ENCODE measurements at regions of chr3 and their contacts with region 1.

Region 1: DNA sequence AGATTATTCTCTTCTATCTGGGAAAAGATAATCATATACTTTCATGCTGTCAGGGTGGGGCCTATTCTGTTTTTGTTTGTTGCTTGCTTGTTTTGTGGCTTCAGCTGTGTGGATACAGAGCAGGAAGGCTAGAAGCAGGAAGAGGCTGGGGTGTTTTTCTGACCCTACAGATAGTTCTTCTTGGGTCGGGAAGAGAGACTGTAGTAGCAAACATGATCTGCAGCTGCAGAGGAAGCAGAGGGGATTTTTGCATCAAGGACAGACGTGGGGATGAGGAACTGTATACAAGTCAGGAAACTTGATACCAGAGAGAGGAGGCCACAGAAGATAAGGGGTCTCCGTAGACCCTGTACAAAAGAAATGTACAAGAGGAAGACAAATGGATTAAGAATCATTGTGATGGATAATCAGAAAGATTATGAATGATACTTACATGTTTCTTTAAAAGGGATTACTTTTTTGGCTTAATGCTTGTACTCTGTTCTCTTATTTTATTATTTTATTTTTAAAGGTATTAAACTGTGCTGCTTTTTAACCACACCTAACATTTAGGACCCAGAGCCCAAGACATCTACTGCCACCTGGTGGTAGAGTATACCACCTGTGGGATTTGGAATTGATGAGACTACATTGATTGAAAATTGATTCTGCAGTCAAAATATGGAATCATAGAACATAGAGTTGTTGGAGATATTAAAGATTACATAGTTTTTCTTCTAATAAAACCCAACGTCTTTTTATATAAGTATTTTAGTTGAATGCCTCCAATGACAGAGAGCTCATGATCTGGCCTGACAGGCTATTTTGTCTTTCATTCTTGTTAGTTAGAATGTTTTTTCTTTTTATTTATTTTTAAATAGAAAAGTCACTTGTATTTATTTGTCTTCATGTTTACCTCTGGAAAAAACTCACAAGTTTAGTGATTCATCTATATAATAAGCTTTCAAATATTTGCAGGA is 87.3 kb upstream of the ROPN1 start:
- DNase-seq: no peak
- ATAC-seq: peak; percentile 53

Region 2: DNA sequence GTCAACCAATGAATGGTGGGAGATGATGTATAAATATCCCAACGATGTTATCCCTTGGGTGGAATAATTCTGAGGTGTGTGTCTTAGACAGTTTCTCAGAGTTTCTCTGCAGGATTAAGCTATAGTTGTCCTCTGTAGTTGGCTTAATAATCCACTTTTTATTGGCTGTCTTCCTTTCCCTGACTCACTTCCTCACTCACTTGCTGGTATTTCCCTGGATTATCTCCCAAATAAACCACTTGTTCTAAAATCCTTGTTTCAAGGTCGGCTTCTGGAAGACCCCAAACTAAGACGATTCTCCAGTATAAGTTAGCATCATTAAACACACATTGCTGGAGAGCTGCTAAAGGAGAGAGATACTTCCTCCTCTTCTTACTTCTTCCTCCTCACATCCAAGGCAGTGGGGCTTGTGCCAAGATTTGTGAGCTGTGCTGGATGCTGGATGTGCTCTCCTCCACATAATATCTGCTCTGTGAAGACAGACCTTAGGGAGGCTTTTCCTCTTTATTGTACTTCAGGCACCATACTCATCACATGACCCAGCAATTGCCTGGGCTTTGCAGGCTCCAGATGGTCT is 64.8 kb before region 1 on chr3:
- intact Hi-C with region 1: loop called (anchors 2 kb)
- DNase-seq: no peak
- ATAC-seq: no peak

Region 3: DNA sequence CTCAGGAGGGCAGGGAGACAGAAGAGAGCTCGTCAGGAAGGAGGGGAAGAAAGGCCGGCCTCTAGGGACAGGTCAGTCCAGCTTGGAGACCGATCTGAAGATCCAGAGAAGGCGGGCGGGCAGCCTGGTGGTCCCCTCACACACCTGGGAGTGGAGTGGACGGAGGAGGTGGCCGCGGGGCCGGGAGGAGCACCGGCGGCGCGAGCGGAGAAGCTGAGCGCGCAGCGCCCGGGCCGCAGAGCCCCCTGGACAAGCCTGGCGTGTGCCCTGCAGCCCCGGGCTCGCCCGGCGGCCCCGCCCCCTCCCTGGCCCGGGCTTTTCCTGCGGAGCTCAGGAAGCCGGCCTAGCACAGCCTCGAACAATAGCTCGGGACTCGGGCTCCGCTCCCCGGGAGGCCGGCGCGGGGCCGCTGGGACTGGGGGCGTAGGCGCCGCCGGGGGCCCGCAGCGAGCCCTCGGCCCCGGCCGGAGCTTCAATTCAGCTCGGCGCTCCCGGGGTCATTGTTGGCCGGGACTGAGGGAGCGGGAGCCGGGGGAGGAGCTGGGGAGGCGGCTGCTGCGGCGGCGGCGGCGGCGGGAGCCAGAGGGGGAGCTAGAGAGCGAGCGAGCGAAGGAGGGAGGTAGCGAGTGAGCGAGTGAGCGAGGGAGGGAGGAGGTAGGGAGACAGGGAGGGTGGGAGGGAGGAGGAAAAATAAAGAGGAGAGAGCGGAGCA is 46.4 kb before region 1 on chr3:
- intact Hi-C with region 1: loop called (anchors 5 kb)
- DNase-seq: peak; percentile 90
- ATAC-seq: peak; percentile 98